PC-9 (cell line): ENCODE measurements at regions of chr7 and their contacts with region 1.

Region 1: GRCh38 chr7:101085162-101085987 is at the start of gene TRIM56:
- DNase-seq: peak; percentile 98 to 99
- H3K4me3 ChIP-seq: peak within 1 kb of the TSS; percentile 88
- H3K27ac ChIP-seq: peak within 1 kb of the TSS; percentile 88
- H3K4me1 ChIP-seq: peaks cover 39% of the 10 kb centered on the region
- H3K27me3 ChIP-seq: no peaks in the 10 kb centered on the region
- CTCF ChIP-seq: no peak
- total RNA-seq, gene TRIM56: 72.3 and 81.6 TPM in 2 replicates

Region 2: DNA sequence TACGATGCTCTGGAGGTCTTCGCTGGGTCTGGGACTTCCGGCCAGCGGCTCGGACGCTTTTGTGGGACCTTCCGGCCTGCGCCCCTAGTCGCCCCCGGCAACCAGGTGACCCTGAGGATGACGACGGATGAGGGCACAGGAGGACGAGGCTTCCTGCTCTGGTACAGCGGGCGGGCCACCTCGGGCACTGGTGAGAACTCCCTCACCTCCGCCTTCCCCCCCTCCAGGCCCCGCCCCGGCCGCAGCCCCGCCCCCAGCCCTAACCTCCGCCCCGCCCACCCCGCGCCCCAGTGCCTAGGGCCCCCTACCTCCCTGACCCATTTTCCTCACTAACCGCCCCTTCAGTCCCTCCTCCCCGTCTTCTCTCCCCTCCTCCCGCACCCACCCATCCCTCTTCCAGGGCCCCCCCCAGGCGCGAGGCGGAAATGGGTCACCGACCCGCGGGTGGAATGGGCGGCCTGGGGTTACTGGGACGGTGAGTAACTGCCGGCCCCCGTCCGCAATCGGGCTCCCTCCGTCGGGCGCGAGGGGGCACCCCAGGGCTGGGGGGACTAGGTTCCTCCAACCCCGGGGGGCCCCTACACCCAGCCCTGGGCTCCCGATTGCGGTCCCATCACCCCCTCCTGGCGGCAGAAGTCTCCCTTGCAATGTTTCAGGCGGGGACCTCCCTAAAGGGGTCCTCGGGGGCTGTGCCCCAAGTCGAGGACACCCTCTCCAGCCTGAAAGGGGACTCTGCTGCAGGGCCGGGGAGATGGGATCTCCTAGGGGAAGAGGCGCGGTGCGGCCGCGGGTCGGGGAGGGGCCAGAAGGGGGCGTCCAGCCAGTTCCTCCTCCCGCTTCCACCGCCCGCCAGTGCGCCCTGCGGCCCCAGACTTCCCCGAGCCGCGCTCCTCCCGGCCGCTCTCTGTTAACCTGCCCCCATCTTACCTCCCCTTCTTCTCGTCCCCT is 481.1 kb before region 1 on chr7:
- CTCF ChIA-PET with region 1: no interaction called
- POLR2A ChIA-PET with region 1: interaction called, 16 read pairs
- intact Hi-C with region 1: no loop called
- DNase-seq: peak; percentile 54 to 84
- H3K4me3 ChIP-seq: peak overlapping the region; percentile 75
- H3K27ac ChIP-seq: no peak overlapping the region
- H3K4me1 ChIP-seq: peaks cover 24% of the 10 kb centered on the region
- H3K27me3 ChIP-seq: no peaks in the 10 kb centered on the region
- CTCF ChIP-seq: peak; percentile 72; the same call in 1 of the 2 replicates

Region 3: DNA sequence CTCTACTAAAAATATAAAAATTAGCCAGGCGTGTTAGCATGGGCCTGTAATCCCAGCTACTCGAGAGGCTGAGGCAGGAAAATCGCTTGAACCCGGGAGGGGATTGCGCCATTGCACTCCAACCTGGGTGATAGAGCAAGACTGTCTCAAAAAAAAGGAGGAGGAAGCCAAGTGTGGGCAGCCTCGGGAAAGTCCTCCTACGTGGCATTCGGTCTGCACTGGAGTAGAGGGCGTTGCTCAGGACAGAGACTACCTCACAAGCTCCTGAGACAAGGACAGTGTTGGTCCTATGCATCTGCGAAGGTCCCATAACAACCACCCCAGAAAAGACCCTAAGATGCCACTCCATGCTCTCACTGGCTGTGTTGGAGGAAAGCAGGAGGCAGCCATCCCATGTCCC is 31.5 kb after region 1 on chr7:
- CTCF ChIA-PET with region 1: interaction called, 4 read pairs
- POLR2A ChIA-PET with region 1: interaction called, 16 read pairs
- intact Hi-C with region 1: loop called (anchors 1 kb)
- DNase-seq: no peak
- H3K4me3 ChIP-seq: no peak overlapping the region
- H3K27ac ChIP-seq: peak overlapping the region; percentile 99
- H3K4me1 ChIP-seq: peaks cover 58% of the 10 kb centered on the region
- H3K27me3 ChIP-seq: no peaks in the 10 kb centered on the region
- CTCF ChIP-seq: no peak

Region 4: GRCh38 chr7:101153969-101154692 is 68.8 kb after region 1 on chr7 and contains the start of gene AP1S1:
- CTCF ChIA-PET with region 1: interaction called, 14 read pairs
- POLR2A ChIA-PET with region 1: interaction called, 7 read pairs
- intact Hi-C with region 1: no loop called
- DNase-seq: peak; percentile 83 to 92
- H3K4me3 ChIP-seq: peak within 1 kb of the TSS; percentile 84
- H3K27ac ChIP-seq: peak within 1 kb of the TSS; percentile 54
- H3K4me1 ChIP-seq: peaks cover 38% of the 10 kb centered on the region
- H3K27me3 ChIP-seq: no peaks in the 10 kb centered on the region
- CTCF ChIP-seq: no peak
- total RNA-seq, gene AP1S1: 227 and 308 TPM in 2 replicates

Region 5: GRCh38 chr7:101363734-101364374 is 278.5 kb after region 1 on chr7:
- CTCF ChIA-PET with region 1: no interaction called
- POLR2A ChIA-PET with region 1: no interaction called
- intact Hi-C with region 1: no loop called
- DNase-seq: peak; percentile 39 to 73
- H3K4me3 ChIP-seq: peak overlapping the region; percentile 34; the same call in 1 of the 2 replicates
- H3K27ac ChIP-seq: no peak overlapping the region
- H3K4me1 ChIP-seq: no peaks in the 10 kb centered on the region
- H3K27me3 ChIP-seq: 0 out of 2 replicates have a peak, but pooled peaks cover 7% of the 10 kb centered on the region
- CTCF ChIP-seq: peak; percentile 86

Region 6: GRCh38 chr7:101527844-101528667 is 442.7 kb after region 1 on chr7:
- CTCF ChIA-PET with region 1: no interaction called
- POLR2A ChIA-PET with region 1: no interaction called
- intact Hi-C with region 1: no loop called
- DNase-seq: no peak
- H3K4me3 ChIP-seq: no peak overlapping the region
- H3K27ac ChIP-seq: no peak overlapping the region
- H3K4me1 ChIP-seq: no peaks in the 10 kb centered on the region
- H3K27me3 ChIP-seq: peaks cover 32% of the 10 kb centered on the region
- CTCF ChIP-seq: no peak

Region 7: GRCh38 chr7:102093287-102094001 is 1008.1 kb after region 1 on chr7:
- CTCF ChIA-PET with region 1: no interaction called
- POLR2A ChIA-PET with region 1: no interaction called
- intact Hi-C with region 1: no loop called
- DNase-seq: no peak
- H3K4me3 ChIP-seq: no peak overlapping the region
- H3K27ac ChIP-seq: no peak overlapping the region
- H3K4me1 ChIP-seq: no peaks in the 10 kb centered on the region; the same call in 1 of the 2 replicates
- H3K27me3 ChIP-seq: no peaks in the 10 kb centered on the region
- CTCF ChIP-seq: no peak